Mucosa of descending colon (tissue), 3 donors: ENCODE measurements at regions of chr12 and their contacts with region 1.

Region 1: GRCh38 chr12:49288412-49288853 is 6.5 kb upstream of the PRPH start:
- DNase-seq: peak in 1 of 3 donors; percentile 78
- ATAC-seq: peak; percentile 71
- H3K4me3 ChIP-seq: no peak overlapping the region
- H3K4me1 ChIP-seq: no peaks in the 10 kb centered on the region
- CTCF ChIP-seq: peak; percentile 69

Region 2: GRCh38 chr12:49336645-49337584 is 48.5 kb after region 1 on chr12 and contains the start of gene C1QL4:
- intact Hi-C with region 1: loop called (anchors 10 kb)
- DNase-seq: peak; percentile 81 to 93 (median 91)
- ATAC-seq: peak; percentile 93
- H3K4me3 ChIP-seq: no peak within 1 kb of the TSS
- H3K4me1 ChIP-seq: peaks cover 18% of the 10 kb centered on the region
- CTCF ChIP-seq: peak; percentile 97
- total RNA-seq, gene C1QL4: not detected

Region 3: DNA sequence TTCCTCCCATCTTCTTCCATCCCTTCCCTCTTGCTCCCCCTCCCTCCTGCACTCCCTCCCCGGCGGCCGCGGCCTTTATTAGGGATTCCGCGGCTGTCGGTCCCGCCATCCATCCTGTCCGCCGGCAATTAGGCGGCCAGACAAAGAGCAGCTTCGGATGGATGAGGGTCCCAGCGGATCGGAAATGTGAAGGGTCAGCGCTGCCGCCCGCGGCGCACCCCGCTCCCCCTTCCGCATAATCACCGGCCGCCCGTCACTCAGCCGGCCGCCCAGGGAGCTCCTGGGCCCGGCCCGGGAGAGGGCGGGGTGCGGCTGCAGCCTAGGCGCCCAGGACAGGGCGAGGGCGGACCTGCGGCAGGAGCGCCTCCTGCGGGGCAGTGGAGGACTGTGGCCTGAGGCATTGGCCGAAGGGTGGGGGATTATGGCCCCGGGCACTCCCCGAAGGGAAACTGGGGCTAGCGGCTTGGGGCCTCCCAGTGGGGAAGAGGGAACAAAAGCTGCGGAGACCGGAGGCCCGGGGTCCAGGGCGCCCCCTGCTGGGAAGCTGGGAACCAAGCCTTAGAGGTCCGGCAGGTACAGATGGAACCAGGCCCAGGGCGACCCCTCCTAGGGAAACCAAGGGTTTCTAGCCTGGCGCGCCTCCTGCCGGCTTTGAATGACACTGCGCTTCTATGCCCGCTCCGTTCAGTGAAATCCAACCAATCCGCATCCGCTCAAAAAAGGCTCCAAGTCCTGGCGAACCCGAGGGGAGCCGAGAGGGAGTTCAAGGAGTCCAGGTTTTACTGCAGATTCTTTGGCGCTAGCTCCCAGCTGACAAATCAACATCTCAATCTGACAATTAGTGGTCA is 53.9 kb after region 1 on chr12:
- intact Hi-C with region 1: loop called (anchors 10 kb)
- DNase-seq: peak; percentile 83 to 88 (median 86)
- ATAC-seq: peak; percentile 80
- H3K4me3 ChIP-seq: no peak overlapping the region
- H3K4me1 ChIP-seq: peaks cover 47% of the 10 kb centered on the region
- CTCF ChIP-seq: peak; percentile 84

Region 4: GRCh38 chr12:49515266-49515665 is 226.8 kb after region 1 on chr12:
- intact Hi-C with region 1: no loop called
- DNase-seq: no peak
- ATAC-seq: no peak
- H3K4me3 ChIP-seq: no peak overlapping the region
- H3K4me1 ChIP-seq: no peaks in the 10 kb centered on the region
- CTCF ChIP-seq: no peak